Panc1 (cell line): ENCODE measurements at regions of chr18 and their contacts with region 1.

Region 1: GRCh38 chr18:22800551-22800951 is 132.6 kb upstream of the RBBP8 start:
- DNase-seq: no peak
- ATAC-seq: no peak
- H3K4me3 ChIP-seq: no peak overlapping the region
- H3K27ac ChIP-seq: no peak overlapping the region
- H3K4me1 ChIP-seq: no peaks in the 10 kb centered on the region
- H3K27me3 ChIP-seq: no peaks in the 10 kb centered on the region
- CTCF ChIP-seq: no peak

Region 2: GRCh38 chr18:22734776-22735627 is 65.5 kb before region 1 on chr18:
- CTCF ChIA-PET with region 1: no interaction called
- POLR2A ChIA-PET with region 1: no interaction called
- in situ Hi-C with region 1: no loop called
- intact Hi-C with region 1: no loop called
- DNase-seq: no peak
- ATAC-seq: no peak
- H3K4me3 ChIP-seq: no peak overlapping the region
- H3K27ac ChIP-seq: no peak overlapping the region
- H3K4me1 ChIP-seq: no peaks in the 10 kb centered on the region
- H3K27me3 ChIP-seq: no peaks in the 10 kb centered on the region
- CTCF ChIP-seq: no peak

Region 3: GRCh38 chr18:22822024-22822423 is 21.5 kb after region 1 on chr18:
- CTCF ChIA-PET with region 1: interaction called, 3 read pairs
- POLR2A ChIA-PET with region 1: interaction called, 10 read pairs
- in situ Hi-C with region 1: no loop called
- intact Hi-C with region 1: no loop called
- DNase-seq: no peak
- ATAC-seq: no peak
- H3K4me3 ChIP-seq: no peak overlapping the region
- H3K27ac ChIP-seq: no peak overlapping the region
- H3K4me1 ChIP-seq: no peaks in the 10 kb centered on the region
- H3K27me3 ChIP-seq: peaks cover 7% of the 10 kb centered on the region
- CTCF ChIP-seq: no peak

Region 4: DNA sequence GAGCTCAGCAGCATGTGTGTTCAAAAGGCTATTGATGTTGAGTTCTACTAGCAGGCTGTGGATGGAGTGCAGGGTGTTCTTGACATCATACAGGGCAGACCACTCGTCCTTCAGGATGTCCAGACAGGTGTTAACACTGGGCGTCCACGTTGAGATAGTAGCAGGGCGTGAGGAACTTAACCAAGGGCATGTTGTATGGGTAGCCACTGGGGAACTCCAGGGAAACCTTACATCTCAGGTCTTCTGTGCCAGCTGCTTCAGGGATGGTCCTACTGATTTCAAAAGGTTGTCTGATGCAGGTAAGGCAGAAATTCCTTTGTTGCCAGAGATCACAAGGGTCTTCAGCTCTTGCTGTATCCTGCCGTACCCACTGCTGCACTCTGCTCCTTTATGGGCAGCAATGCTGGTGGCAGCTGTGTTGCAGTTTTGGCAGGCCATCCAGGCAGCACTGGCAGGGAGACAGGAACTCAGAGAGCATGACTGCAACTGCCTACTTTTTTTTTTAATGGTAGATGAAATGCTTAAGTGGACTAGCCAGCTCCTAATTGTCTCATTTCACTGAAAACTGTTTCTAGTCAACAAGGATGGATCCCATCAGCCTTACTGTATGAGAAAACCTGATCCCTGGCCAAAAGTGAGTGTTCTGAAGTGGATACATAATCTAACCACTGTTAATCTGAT is 100.1 kb after region 1 on chr18:
- CTCF ChIA-PET with region 1: interaction called, 11 read pairs
- POLR2A ChIA-PET with region 1: no interaction called
- in situ Hi-C with region 1: no loop called
- intact Hi-C with region 1: no loop called
- DNase-seq: no peak
- ATAC-seq: no peak
- H3K4me3 ChIP-seq: no peak overlapping the region
- H3K27ac ChIP-seq: no peak overlapping the region
- H3K4me1 ChIP-seq: no peaks in the 10 kb centered on the region
- H3K27me3 ChIP-seq: no peaks in the 10 kb centered on the region
- CTCF ChIP-seq: no peak

Region 5: DNA sequence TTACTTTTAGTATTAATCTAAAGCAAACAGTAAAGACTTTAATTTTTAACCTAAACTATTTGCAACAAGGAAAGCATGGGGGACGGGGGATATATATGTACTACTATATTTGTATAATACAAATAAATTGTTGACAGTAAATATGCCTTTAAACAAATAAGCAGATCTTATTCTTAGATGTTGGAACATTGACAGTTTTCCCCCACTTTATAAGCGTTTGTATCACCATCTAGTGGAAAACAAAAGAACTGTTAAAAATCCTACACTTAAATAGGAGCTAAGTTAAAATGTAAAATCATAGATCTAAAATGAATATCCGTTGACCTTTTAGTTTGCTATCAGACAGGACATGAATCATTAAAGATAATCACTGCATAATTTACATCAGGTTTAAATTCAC is 182.6 kb after region 1 on chr18:
- CTCF ChIA-PET with region 1: interaction called, 10 read pairs
- POLR2A ChIA-PET with region 1: no interaction called
- in situ Hi-C with region 1: no loop called
- intact Hi-C with region 1: loop called (anchors 5 kb)
- DNase-seq: peak; percentile 27
- ATAC-seq: peak; percentile 41; the same call in 1 of the 2 replicates
- H3K4me3 ChIP-seq: no peak overlapping the region
- H3K27ac ChIP-seq: no peak overlapping the region
- H3K4me1 ChIP-seq: no peaks in the 10 kb centered on the region
- H3K27me3 ChIP-seq: no peaks in the 10 kb centered on the region
- CTCF ChIP-seq: peak; percentile 42; the same call in 1 of the 2 replicates

Region 6: DNA sequence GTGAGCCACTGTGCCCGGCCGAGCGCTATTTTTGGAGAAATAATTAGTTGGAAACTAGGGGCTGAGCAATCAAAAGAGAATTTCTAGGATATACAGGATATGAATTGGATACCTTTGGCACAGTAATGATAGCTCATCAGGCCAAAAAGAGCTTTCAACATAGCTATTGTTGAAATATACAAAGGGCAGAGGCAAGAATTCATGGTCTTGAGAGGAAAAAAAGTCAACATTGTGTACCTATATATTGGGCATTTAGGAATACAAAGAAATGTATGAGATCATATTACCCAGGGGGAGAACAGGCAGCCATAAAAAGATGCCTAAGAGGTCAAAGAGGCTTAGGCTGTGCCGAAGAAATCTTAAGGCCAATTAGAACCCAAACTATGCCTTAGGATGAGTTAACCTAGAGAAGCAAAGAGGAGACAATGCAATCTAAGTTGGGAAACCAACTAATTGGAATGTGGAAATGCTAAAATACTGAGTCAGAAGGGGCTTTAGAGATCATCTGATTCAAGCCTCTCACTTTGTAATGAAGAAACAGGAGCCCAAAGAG is 231.6 kb after region 1 on chr18:
- CTCF ChIA-PET with region 1: no interaction called
- POLR2A ChIA-PET with region 1: no interaction called
- in situ Hi-C with region 1: no loop called
- intact Hi-C with region 1: no loop called
- DNase-seq: no peak
- ATAC-seq: peak; percentile 49
- H3K4me3 ChIP-seq: no peak overlapping the region
- H3K27ac ChIP-seq: peak overlapping the region; percentile 36
- H3K4me1 ChIP-seq: peaks cover 14% of the 10 kb centered on the region
- H3K27me3 ChIP-seq: no peaks in the 10 kb centered on the region
- CTCF ChIP-seq: no peak

Region 7: DNA sequence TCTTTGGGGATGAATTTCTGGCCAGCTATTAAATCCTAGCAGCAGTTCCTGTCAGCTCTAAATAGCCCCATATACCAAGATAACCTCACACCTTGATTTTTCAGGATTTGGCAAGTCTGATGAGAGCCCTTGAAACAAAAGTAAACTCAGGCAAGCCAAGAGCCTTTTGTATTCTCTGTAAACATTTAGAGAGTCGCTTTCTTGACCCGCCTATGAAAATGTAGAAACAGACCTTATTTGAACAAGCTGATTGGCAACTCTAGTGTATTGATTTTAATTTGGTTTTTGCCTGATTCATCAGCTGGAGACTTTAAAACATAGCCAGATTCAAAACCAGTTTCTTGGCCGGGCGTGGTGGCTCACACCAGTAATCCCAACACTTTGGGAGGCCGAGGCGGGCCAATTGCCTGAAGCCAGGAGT is 378.1 kb after region 1 on chr18:
- CTCF ChIA-PET with region 1: no interaction called
- POLR2A ChIA-PET with region 1: no interaction called
- in situ Hi-C with region 1: no loop called
- intact Hi-C with region 1: no loop called
- DNase-seq: no peak
- ATAC-seq: no peak
- H3K4me3 ChIP-seq: no peak overlapping the region
- H3K27ac ChIP-seq: no peak overlapping the region
- H3K4me1 ChIP-seq: peaks cover 20% of the 10 kb centered on the region
- H3K27me3 ChIP-seq: no peaks in the 10 kb centered on the region
- CTCF ChIP-seq: no peak